ENCODE measurements at regions of chr1 and their contacts with region 1.

Region 1: GRCh38 chr1:212291505-212292134 is 6.4 kb downstream of the PPP2R5A start:
- DNase-seq: no peak
- H3K4me3 ChIP-seq: peak overlapping the region in 1 of 4 donors; percentile 3
- H3K27ac ChIP-seq: peak overlapping the region; percentile 51 to 99 (median 62)
- H3K4me1 ChIP-seq: peaks cover 22 to 97% (median 44%) of the 10 kb centered on the region in 3 donors
- H3K27me3 ChIP-seq: no peaks in the 10 kb centered on the region
- CTCF ChIP-seq: peak; percentile 57 to 77 (median 62)
- POLR2A ChIP-seq: no peak

Region 2: DNA sequence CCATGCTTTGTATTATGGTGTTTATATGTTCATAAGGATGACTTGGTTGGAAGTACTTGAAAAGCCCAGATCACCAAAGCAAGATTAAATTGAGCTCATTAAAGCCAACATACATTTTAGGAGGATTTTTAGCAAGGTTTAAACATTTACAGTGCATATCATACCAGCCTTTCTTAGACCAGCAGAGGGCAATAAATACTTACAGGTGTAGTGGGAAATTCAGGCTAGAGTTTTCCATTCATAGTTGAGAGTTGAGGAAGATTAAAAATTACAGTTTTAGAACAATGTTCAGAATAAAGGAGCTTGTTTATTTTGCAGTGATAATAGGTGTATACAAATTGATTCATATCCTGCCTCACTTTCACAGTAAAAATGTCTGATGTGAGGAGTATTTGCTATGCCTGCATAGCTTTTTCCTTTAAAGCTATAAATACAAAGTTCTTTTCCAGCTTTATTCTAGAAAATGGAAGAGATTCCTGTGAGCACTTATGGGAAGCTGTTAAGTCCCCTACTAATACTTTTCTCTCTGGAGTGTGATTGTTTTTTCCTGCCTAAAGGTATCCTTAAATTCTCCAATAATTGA is 220.8 kb before region 1 on chr1:
- intact Hi-C with region 1: loop called (anchors 5 kb)
- DNase-seq: no peak
- H3K4me3 ChIP-seq: no peak overlapping the region
- H3K27ac ChIP-seq: peak overlapping the region in 1 of 4 donors; percentile 16
- H3K4me1 ChIP-seq: no peaks in the 10 kb centered on the region
- H3K27me3 ChIP-seq: no peaks in the 10 kb centered on the region
- CTCF ChIP-seq: peak; percentile 68 to 88 (median 79)
- POLR2A ChIP-seq: no peak

Measured in esophagus squamous epithelium (tissue), 5 donors.